Dorsolateral prefrontal cortex (tissue), 120 donors: ENCODE measurements at regions of chr9 and their contacts with region 1.

Region 1: GRCh38 chr9:136488247-136489214 is 5.7 kb upstream of the SEC16A start:
- DNase-seq: peak in 7 of 10 donors; percentile 60 to 80 (median 72)
- H3K4me3 ChIP-seq: no peak overlapping the region
- H3K27ac ChIP-seq: no peak overlapping the region
- H3K27me3 ChIP-seq: no peaks in the 10 kb centered on the region
- CTCF ChIP-seq: peak in 55 of 56 donors; percentile 96 to 100 (median 99)

Region 2: GRCh38 chr9:136625101-136626060 is 136.8 kb after region 1 on chr9:
- intact Hi-C with region 1: loop called (anchors 1 to 2 kb)
- DNase-seq: peak in 6 of 10 donors; percentile 33 to 74 (median 50)
- H3K4me3 ChIP-seq: peak overlapping the region in 1 of 59 donors; percentile 28
- H3K27ac ChIP-seq: peak overlapping the region in 19 of 59 donors; percentile 3 to 73 (median 31)
- H3K27me3 ChIP-seq: no peaks in the 10 kb centered on the region
- CTCF ChIP-seq: peak in 55 of 56 donors; percentile 29 to 84 (median 67)